Adrenal gland (tissue), 19 donors: ENCODE measurements at regions of chr17 and their contacts with region 1.

Region 1: DNA sequence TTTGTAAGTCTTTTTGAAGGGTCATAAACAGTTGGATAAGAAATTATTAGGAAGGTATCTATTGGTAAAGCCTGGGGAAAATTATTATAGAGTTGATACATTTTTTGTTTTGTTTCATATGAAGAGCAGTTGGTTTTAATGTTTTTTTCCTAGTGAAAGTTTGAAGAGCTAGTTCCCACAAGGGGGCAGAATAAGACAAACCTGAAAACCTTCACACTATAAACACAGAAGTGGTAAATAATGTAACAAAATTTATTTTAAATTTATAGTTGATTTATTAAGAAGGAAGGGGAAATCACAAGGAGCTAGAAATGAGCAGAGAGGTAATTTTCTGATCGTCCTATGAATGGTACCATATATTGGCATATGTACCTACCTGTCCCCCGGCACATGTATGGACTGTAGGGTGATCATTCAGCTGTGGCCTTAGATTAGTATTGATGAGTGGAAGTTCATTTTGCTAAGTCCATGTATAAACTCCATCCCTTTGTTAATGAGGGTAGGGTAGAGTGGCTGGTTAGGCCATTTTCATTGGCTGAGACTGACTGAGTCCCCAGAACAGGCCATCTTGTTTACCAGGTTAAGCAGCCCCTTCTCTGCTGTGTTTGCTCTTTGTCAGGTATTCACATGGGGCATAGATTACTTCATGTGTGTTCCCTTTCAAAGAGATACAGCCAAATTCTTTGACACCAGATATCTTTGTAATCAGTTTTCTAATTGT is 116.4 kb downstream of the TANC2 start:
- DNase-seq: no peak
- H3K4me3 ChIP-seq: no peak overlapping the region
- H3K27ac ChIP-seq: no peak overlapping the region
- H3K4me1 ChIP-seq: no peaks in the 10 kb centered on the region
- H3K27me3 ChIP-seq: no peaks in the 10 kb centered on the region
- CTCF ChIP-seq: peak in 5 of 6 experiments; percentile 26 to 61 (median 46)
- POLR2A ChIP-seq: no peak

Region 2: GRCh38 chr17:62882878-62883277 is 199.6 kb before region 1 on chr17:
- intact Hi-C with region 1: no loop called
- DNase-seq: no peak
- H3K4me3 ChIP-seq: no peak overlapping the region
- H3K27ac ChIP-seq: no peak overlapping the region
- H3K4me1 ChIP-seq: no peaks in the 10 kb centered on the region
- H3K27me3 ChIP-seq: no peaks in the 10 kb centered on the region
- CTCF ChIP-seq: no peak
- POLR2A ChIP-seq: no peak

Region 3: GRCh38 chr17:62965686-62966425 is 116.6 kb before region 1 on chr17 and contains the start of gene TANC2:
- intact Hi-C with region 1: no loop called
- DNase-seq: peak; percentile 77 to 93 (median 82)
- H3K4me3 ChIP-seq: peak within 1 kb of the TSS; percentile 16 to 95 (median 44)
- H3K27ac ChIP-seq: peak within 1 kb of the TSS in 4 of 5 donors; percentile 62 to 95 (median 72)
- H3K4me1 ChIP-seq: peaks cover 13 to 18% of the 10 kb centered on the region in 2 donors
- H3K27me3 ChIP-seq: no peaks in the 10 kb centered on the region
- CTCF ChIP-seq: peak in 1 of 6 experiments; percentile 6
- POLR2A ChIP-seq: peak; percentile 21 to 42
- total RNA-seq, gene TANC2: 3.1 to 50.7 (median 15.0) TPM

Region 4: GRCh38 chr17:63406689-63407330 is 324.4 kb after region 1 on chr17:
- intact Hi-C with region 1: loop called (anchors 5 to 10 kb)
- DNase-seq: peak; percentile 73 to 93 (median 78)
- H3K4me3 ChIP-seq: no peak overlapping the region
- H3K27ac ChIP-seq: no peak overlapping the region
- H3K4me1 ChIP-seq: no peaks in the 10 kb centered on the region
- H3K27me3 ChIP-seq: no peaks in the 10 kb centered on the region
- CTCF ChIP-seq: peak; percentile 80 to 88 (median 88)
- POLR2A ChIP-seq: no peak